Activated CD8-positive, alpha-beta memory T cell treated with anti-CD3 and anti-CD28 coated beads, Interleukin-2, amount 10 ng/mL, durations not matched to agents 7 days and 5 days (primary cell): ENCODE measurements at regions of chr9 and their contacts with region 1.

Region 1: GRCh38 chr9:1009101-1009707 is 32.7 kb downstream of the DMRT3 start:
- DNase-seq: peak; percentile 82
- ATAC-seq: peak; percentile 91
- H3K4me3 Mint-ChIP-seq: no peak overlapping the region
- H3K27ac Mint-ChIP-seq: no peak overlapping the region
- H3K4me1 Mint-ChIP-seq: peaks cover 16% of the 10 kb centered on the region
- H3K27me3 Mint-ChIP-seq: peaks cover 29% of the 10 kb centered on the region

Region 2: GRCh38 chr9:893843-894420 is 115.3 kb before region 1 on chr9:
- CTCF ChIA-PET with region 1: interaction called, 46 read pairs
- DNase-seq: peak; percentile 72
- ATAC-seq: peak; percentile 93
- H3K4me3 Mint-ChIP-seq: peak overlapping the region; percentile 2
- H3K27ac Mint-ChIP-seq: no peak overlapping the region
- H3K4me1 Mint-ChIP-seq: peaks cover 10% of the 10 kb centered on the region
- H3K27me3 Mint-ChIP-seq: peaks cover 24% of the 10 kb centered on the region

Region 3: GRCh38 chr9:995723-996122 is 13.5 kb before region 1 on chr9:
- CTCF ChIA-PET with region 1: interaction called, 12 read pairs
- DNase-seq: no peak
- ATAC-seq: no peak
- H3K4me3 Mint-ChIP-seq: no peak overlapping the region
- H3K27ac Mint-ChIP-seq: no peak overlapping the region
- H3K4me1 Mint-ChIP-seq: peaks cover 8% of the 10 kb centered on the region
- H3K27me3 Mint-ChIP-seq: peaks cover 22% of the 10 kb centered on the region